ENCODE measurements at regions of chr20 and their contacts with region 1.

Region 1: GRCh38 chr20:35994994-35995453 is 26.6 kb downstream of the CNBD2 start:
- DNase-seq: peak; percentile 89
- H3K4me3 ChIP-seq: no peak overlapping the region
- H3K27ac ChIP-seq: no peak overlapping the region
- H3K4me1 ChIP-seq: peaks cover 20% of the 10 kb centered on the region
- CTCF ChIP-seq: peak; percentile 98

Region 2: GRCh38 chr20:35954200-35954906 is 40.7 kb before region 1 on chr20 and contains the start of gene SCAND1:
- CTCF ChIA-PET with region 1: interaction called, 3 read pairs
- POLR2A ChIA-PET with region 1: interaction called, 16 read pairs
- intact Hi-C with region 1: no loop called
- DNase-seq: peak; percentile 100
- H3K4me3 ChIP-seq: peak within 1 kb of the TSS; percentile 84
- H3K27ac ChIP-seq: peak within 1 kb of the TSS; percentile 97
- H3K4me1 ChIP-seq: peaks cover 16% of the 10 kb centered on the region
- CTCF ChIP-seq: peak; percentile 96
- total RNA-seq, gene SCAND1: 62.5 and 97.6 TPM in 2 replicates

Region 3: GRCh38 chr20:36035745-36036144 is 40.7 kb after region 1 on chr20:
- CTCF ChIA-PET with region 1: no interaction called
- POLR2A ChIA-PET with region 1: no interaction called
- intact Hi-C with region 1: loop called (anchors 5 kb)
- DNase-seq: no peak
- H3K4me3 ChIP-seq: no peak overlapping the region
- H3K27ac ChIP-seq: no peak overlapping the region
- H3K4me1 ChIP-seq: no peaks in the 10 kb centered on the region
- CTCF ChIP-seq: no peak

Region 4: DNA sequence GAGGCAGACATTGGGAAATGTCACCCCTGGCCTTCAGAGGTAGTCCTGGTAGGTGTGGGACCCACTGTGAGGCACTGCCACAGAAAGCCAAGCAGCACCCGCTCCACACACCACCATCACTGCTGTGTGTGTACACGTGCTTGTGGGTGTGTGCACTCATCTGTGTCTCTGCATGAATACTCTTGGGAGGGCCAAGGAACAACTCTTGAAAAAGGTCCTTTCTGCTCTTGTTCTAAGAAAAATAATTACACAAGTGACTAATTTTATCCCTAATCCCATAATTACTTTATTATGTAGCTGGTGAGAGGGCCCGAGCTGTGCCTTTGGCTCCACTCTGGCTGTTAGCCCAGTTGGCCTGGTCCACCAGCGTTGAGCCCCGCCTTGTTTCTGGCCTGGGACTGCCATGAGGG is 137.8 kb after region 1 on chr20:
- CTCF ChIA-PET with region 1: interaction called, 10 read pairs
- POLR2A ChIA-PET with region 1: interaction called, 14 read pairs
- intact Hi-C with region 1: loop called (anchors 1 kb)
- DNase-seq: peak; percentile 60
- H3K4me3 ChIP-seq: no peak overlapping the region
- H3K27ac ChIP-seq: no peak overlapping the region
- H3K4me1 ChIP-seq: peaks cover 33% of the 10 kb centered on the region
- CTCF ChIP-seq: no peak

Region 5: GRCh38 chr20:36145877-36146707 is 151.1 kb after region 1 on chr20:
- CTCF ChIA-PET with region 1: interaction called, 11 read pairs
- POLR2A ChIA-PET with region 1: interaction called, 10 read pairs
- intact Hi-C with region 1: no loop called
- DNase-seq: peak; percentile 45
- H3K4me3 ChIP-seq: no peak overlapping the region
- H3K27ac ChIP-seq: peak overlapping the region; percentile 30
- H3K4me1 ChIP-seq: peaks cover 66% of the 10 kb centered on the region
- CTCF ChIP-seq: no peak

Region 6: GRCh38 chr20:36199345-36200257 is 204.6 kb after region 1 on chr20:
- CTCF ChIA-PET with region 1: interaction called, 6 read pairs
- POLR2A ChIA-PET with region 1: no interaction called
- intact Hi-C with region 1: loop called (anchors 2 kb)
- DNase-seq: peak; percentile 77
- H3K4me3 ChIP-seq: no peak overlapping the region
- H3K27ac ChIP-seq: no peak overlapping the region
- H3K4me1 ChIP-seq: no peaks in the 10 kb centered on the region
- CTCF ChIP-seq: peak; percentile 91